ENCODE measurements at regions of chr21 and their contacts with region 1.

Region 1: GRCh38 chr21:14523234-14523633 is 22.9 kb downstream of the SAMSN1 start:
- DNase-seq: peak; percentile 58
- ATAC-seq: peak; percentile 67
- H3K4me3 ChIP-seq: peak overlapping the region in 3 of 5 experiments; percentile 25 to 42 (median 29)
- H3K4me3 Mint-ChIP-seq: peak overlapping the region; percentile 83
- H3K27ac ChIP-seq: peak overlapping the region; percentile 12 to 69
- H3K27ac Mint-ChIP-seq: peak overlapping the region; percentile 87
- H3K4me1 ChIP-seq: peaks cover 28 to 33% of the 10 kb centered on the region in 2 donors
- H3K4me1 Mint-ChIP-seq: peaks cover 53% of the 10 kb centered on the region
- H3K27me3 ChIP-seq: no peaks in the 10 kb centered on the region
- H3K27me3 Mint-ChIP-seq: no peaks in the 10 kb centered on the region
- CTCF ChIP-seq: no peak

Region 2: GRCh38 chr21:14382835-14383594 is 140.2 kb before region 1 on chr21 and contains the start of gene HSPA13:
- CTCF ChIA-PET with region 1: no interaction called
- POLR2A ChIA-PET with region 1: no interaction called
- intact Hi-C with region 1: loop called (anchors 5 kb)
- DNase-seq: peak; percentile 100
- ATAC-seq: peak; percentile 93
- H3K4me3 ChIP-seq: peak within 1 kb of the TSS; percentile 85 to 95 (median 88)
- H3K4me3 Mint-ChIP-seq: peak within 1 kb of the TSS; percentile 100
- H3K27ac ChIP-seq: peak within 1 kb of the TSS; percentile 91 to 96
- H3K27ac Mint-ChIP-seq: peak within 1 kb of the TSS; percentile 98
- H3K4me1 ChIP-seq: peaks cover 10 to 11% of the 10 kb centered on the region in 2 donors
- H3K4me1 Mint-ChIP-seq: peaks cover 37% of the 10 kb centered on the region
- H3K27me3 ChIP-seq: no peaks in the 10 kb centered on the region
- H3K27me3 Mint-ChIP-seq: no peaks in the 10 kb centered on the region
- CTCF ChIP-seq: no peak
- total RNA-seq, gene HSPA13: 19.1 and 19.3 TPM in 2 replicates

Region 3: GRCh38 chr21:14487490-14488432 is 35.5 kb before region 1 on chr21:
- CTCF ChIA-PET with region 1: no interaction called
- POLR2A ChIA-PET with region 1: no interaction called
- intact Hi-C with region 1: loop called (anchors 5 kb)
- DNase-seq: no peak
- ATAC-seq: no peak
- H3K4me3 ChIP-seq: no peak overlapping the region
- H3K4me3 Mint-ChIP-seq: no peak overlapping the region
- H3K27ac ChIP-seq: peak overlapping the region in 1 of 2 donors; percentile 37
- H3K27ac Mint-ChIP-seq: no peak overlapping the region
- H3K4me1 ChIP-seq: no peaks in the 10 kb centered on the region
- H3K4me1 Mint-ChIP-seq: peaks cover 13% of the 10 kb centered on the region
- H3K27me3 ChIP-seq: no peaks in the 10 kb centered on the region
- H3K27me3 Mint-ChIP-seq: no peaks in the 10 kb centered on the region
- CTCF ChIP-seq: no peak

Region 4: GRCh38 chr21:14533504-14534428 is 10.5 kb after region 1 on chr21:
- CTCF ChIA-PET with region 1: interaction called, 3 read pairs
- POLR2A ChIA-PET with region 1: interaction called, 3 read pairs
- intact Hi-C with region 1: loop called (anchors 1 kb)
- DNase-seq: peak; percentile 76
- ATAC-seq: peak; percentile 77
- H3K4me3 ChIP-seq: peak overlapping the region in 4 of 5 experiments; percentile 13 to 54 (median 30)
- H3K4me3 Mint-ChIP-seq: peak overlapping the region; percentile 81
- H3K27ac ChIP-seq: peak overlapping the region; percentile 77 to 92
- H3K27ac Mint-ChIP-seq: peak overlapping the region; percentile 95
- H3K4me1 ChIP-seq: peaks cover 22 to 31% of the 10 kb centered on the region in 2 donors
- H3K4me1 Mint-ChIP-seq: peaks cover 58% of the 10 kb centered on the region
- H3K27me3 ChIP-seq: no peaks in the 10 kb centered on the region
- H3K27me3 Mint-ChIP-seq: no peaks in the 10 kb centered on the region
- CTCF ChIP-seq: no peak

Region 5: GRCh38 chr21:14554948-14555347 is 31.7 kb after region 1 on chr21:
- CTCF ChIA-PET with region 1: no interaction called
- POLR2A ChIA-PET with region 1: no interaction called
- intact Hi-C with region 1: loop called (anchors 5 kb)
- DNase-seq: no peak
- ATAC-seq: no peak
- H3K4me3 ChIP-seq: no peak overlapping the region
- H3K4me3 Mint-ChIP-seq: peak overlapping the region; percentile 4
- H3K27ac ChIP-seq: peak overlapping the region in 1 of 2 donors; percentile 3
- H3K27ac Mint-ChIP-seq: peak overlapping the region; percentile 62
- H3K4me1 ChIP-seq: peaks cover 43 to 47% of the 10 kb centered on the region in 2 donors
- H3K4me1 Mint-ChIP-seq: peaks cover 52% of the 10 kb centered on the region
- H3K27me3 ChIP-seq: no peaks in the 10 kb centered on the region
- H3K27me3 Mint-ChIP-seq: no peaks in the 10 kb centered on the region
- CTCF ChIP-seq: no peak

Region 6: DNA sequence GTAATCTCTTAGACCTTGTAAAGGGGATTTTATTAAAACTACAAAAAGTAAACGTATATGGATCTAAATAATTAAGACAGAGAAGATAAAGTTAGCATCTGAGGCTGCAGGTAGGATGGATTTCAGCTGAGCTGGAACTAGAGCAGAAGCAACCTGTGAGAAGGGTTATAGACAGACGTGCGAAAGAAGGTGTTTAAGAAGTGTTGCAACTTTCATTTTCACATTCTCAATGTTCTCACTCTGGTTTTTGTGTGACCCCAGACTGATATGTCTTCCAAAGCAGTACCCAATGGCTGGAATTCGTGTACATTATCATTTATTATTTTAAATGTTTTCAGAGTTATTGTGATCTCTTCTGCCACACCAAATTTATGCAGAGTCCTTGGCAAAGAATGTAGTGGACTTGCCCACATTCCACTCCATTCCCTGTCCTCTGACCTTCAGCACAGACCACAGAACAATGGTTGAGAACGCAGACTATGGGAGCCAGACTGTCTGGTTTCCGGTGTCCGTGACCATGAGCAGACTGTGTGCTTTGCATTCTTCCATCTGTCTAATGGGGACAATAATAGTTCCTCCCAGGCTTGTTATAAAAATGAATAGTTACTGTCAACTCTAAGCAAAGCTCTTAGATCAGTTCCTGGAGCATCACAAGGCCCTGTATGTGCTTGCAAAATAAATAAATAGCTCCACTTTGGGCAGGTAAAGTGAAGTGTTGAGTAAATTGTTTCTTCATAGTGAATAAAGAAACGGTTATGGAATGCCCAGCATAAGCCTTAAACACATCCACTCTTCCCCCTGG is 163.4 kb after region 1 on chr21:
- CTCF ChIA-PET with region 1: interaction called, 4 read pairs
- POLR2A ChIA-PET with region 1: no interaction called
- intact Hi-C with region 1: loop called (anchors 5 kb)
- DNase-seq: peak; percentile 52
- ATAC-seq: peak; percentile 32
- H3K4me3 ChIP-seq: peak overlapping the region in 3 of 5 experiments; percentile 5 to 18 (median 6)
- H3K4me3 Mint-ChIP-seq: peak overlapping the region; percentile 78
- H3K27ac ChIP-seq: peak overlapping the region; percentile 64 to 80
- H3K27ac Mint-ChIP-seq: peak overlapping the region; percentile 88
- H3K4me1 ChIP-seq: peaks cover 57% of the 10 kb centered on the region in 2 donors
- H3K4me1 Mint-ChIP-seq: peaks cover 56% of the 10 kb centered on the region
- H3K27me3 ChIP-seq: no peaks in the 10 kb centered on the region
- H3K27me3 Mint-ChIP-seq: no peaks in the 10 kb centered on the region
- CTCF ChIP-seq: no peak

Region 7: DNA sequence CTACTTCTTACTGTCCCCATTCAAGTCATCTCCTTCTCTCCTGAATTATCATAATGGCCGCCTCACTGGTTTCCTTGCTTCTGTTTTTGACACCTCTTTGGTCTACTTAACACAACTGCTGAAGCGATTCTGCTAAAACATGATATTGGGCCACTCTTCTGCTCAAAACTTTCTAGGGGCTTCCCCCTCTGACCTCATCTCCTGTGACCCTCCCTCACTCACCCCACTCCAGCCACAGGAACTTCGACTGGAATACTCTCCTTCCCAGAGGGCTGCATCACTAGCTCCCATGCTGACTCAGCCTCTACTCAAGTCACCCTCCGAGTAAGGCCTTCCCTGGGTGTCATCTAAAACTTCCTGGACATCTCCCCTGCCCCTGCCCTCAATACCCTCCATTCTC is 505.8 kb after region 1 on chr21:
- CTCF ChIA-PET with region 1: no interaction called
- POLR2A ChIA-PET with region 1: no interaction called
- intact Hi-C with region 1: no loop called
- DNase-seq: peak; percentile 20
- ATAC-seq: peak; percentile 51
- H3K4me3 ChIP-seq: no peak overlapping the region
- H3K4me3 Mint-ChIP-seq: no peak overlapping the region
- H3K27ac ChIP-seq: no peak overlapping the region
- H3K27ac Mint-ChIP-seq: peak overlapping the region; percentile 1
- H3K4me1 ChIP-seq: peaks cover 11 to 15% of the 10 kb centered on the region in 2 donors
- H3K4me1 Mint-ChIP-seq: peaks cover 49% of the 10 kb centered on the region
- H3K27me3 ChIP-seq: no peaks in the 10 kb centered on the region
- H3K27me3 Mint-ChIP-seq: no peaks in the 10 kb centered on the region
- CTCF ChIP-seq: no peak